ENCODE measurements at regions of chr2 and their contacts with region 1.

Region 1: DNA sequence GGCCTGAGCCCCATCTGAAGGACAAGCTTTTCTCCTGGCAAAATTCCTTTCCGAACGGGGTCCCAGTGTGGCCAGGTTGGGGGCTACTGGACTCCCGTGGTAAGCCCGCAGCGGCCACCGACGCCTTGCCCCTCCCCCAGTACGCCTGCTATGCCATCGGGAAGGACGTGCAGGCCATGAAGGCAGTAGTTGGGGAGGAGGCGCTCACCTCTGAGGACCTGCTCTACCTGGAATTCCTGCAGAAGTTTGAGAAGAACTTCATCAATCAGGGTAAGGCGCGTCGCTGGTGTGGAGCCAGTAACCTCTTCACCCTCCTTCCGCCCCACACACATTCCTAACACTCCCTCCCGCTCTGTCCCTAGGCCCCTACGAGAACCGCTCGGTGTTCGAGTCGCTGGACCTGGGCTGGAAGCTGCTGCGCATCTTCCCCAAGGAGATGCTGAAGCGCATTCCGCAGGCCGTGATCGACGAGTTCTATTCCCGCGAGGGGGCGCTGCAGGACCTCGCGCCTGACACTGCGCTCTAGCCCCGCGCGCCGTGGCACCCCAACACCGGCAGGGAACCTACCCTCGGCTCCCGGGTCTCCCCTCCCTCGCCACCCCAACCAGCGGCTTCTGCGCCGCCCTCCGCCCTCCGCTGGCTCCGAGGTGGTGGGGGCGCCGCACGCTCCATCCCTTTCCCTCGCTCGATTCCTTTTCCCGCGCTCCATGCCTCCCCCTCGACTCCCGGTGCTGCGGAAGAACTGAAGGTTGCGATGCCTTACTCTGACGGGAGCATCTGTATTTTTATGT is 13.6 kb upstream of the ANKRD53 start:
- DNase-seq: peak in 1 of 2 donors; percentile 80
- H3K4me3 ChIP-seq: peak overlapping the region; percentile 63 to 68
- H3K27ac ChIP-seq: no peak overlapping the region
- H3K4me1 ChIP-seq: peaks cover 0 to 4% of the 10 kb centered on the region in 2 donors
- H3K27me3 ChIP-seq: no peaks in the 10 kb centered on the region
- CTCF ChIP-seq: peak; percentile 73 to 90 (median 78)

Region 2: GRCh38 chr2:69464575-69464974 is 1500.2 kb before region 1 on chr2:
- intact Hi-C with region 1: no loop called
- DNase-seq: peak in 1 of 2 donors; percentile 70
- H3K4me3 ChIP-seq: no peak overlapping the region
- H3K27ac ChIP-seq: no peak overlapping the region
- H3K4me1 ChIP-seq: no peaks in the 10 kb centered on the region
- H3K27me3 ChIP-seq: no peaks in the 10 kb centered on the region
- CTCF ChIP-seq: no peak

Region 3: GRCh38 chr2:71000780-71001591 is 36.2 kb after region 1 on chr2:
- intact Hi-C with region 1: loop called (anchors 1 kb)
- DNase-seq: peak in 1 of 2 donors; percentile 86
- H3K4me3 ChIP-seq: peak overlapping the region in 1 of 2 donors; percentile 43
- H3K27ac ChIP-seq: no peak overlapping the region
- H3K4me1 ChIP-seq: no peaks in the 10 kb centered on the region
- H3K27me3 ChIP-seq: no peaks in the 10 kb centered on the region
- CTCF ChIP-seq: peak; percentile 77 to 97 (median 95)